ENCODE measurements at regions of chr2 and their contacts with region 1.

Region 1: GRCh38 chr2:241041589-241042158 is 43.3 kb downstream of the SNED1 start:
- DNase-seq: no peak
- H3K4me3 ChIP-seq: no peak overlapping the region
- H3K27ac ChIP-seq: no peak overlapping the region
- H3K4me1 ChIP-seq: no peaks in the 10 kb centered on the region
- H3K27me3 ChIP-seq: peaks cover 5% of the 10 kb centered on the region
- CTCF ChIP-seq: no peak

Region 2: DNA sequence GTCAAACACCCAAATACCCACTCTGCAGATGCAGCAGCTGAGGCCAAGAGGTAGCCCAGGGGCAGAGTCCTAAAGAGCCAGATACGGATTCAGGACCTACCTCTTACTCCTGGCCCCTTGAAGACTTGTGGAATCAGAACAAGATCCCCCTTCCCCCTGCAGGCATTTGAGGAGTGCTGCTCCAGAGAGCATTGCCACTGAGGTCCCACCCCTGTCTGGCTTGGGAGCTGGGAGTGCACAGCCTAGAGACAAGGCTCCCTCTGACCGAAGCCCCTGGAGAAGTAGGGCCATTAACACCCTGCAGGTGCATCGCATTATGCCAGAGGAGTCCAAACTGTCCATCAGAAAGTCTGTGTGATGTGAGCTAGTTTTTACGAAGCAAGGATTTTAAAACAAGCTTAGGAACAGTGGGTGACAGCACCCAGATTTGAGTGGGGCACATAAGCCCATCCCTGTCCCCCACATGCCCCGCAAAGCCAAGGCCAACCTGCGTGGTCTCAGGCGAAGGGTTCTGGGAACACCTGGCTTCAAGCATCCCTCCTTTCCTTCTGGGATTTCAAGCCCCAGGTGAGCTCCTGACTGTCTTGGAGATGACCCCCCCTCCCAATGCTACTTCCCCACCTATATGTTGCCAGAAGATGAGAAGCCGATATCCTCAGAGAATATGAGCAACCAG is 12.0 kb after region 1 on chr2:
- CTCF ChIA-PET with region 1: no interaction called
- POLR2A ChIA-PET with region 1: no interaction called
- intact Hi-C with region 1: no loop called
- DNase-seq: no peak
- H3K4me3 ChIP-seq: no peak overlapping the region
- H3K27ac ChIP-seq: no peak overlapping the region
- H3K4me1 ChIP-seq: no peaks in the 10 kb centered on the region
- H3K27me3 ChIP-seq: no peaks in the 10 kb centered on the region
- CTCF ChIP-seq: no peak

Region 3: DNA sequence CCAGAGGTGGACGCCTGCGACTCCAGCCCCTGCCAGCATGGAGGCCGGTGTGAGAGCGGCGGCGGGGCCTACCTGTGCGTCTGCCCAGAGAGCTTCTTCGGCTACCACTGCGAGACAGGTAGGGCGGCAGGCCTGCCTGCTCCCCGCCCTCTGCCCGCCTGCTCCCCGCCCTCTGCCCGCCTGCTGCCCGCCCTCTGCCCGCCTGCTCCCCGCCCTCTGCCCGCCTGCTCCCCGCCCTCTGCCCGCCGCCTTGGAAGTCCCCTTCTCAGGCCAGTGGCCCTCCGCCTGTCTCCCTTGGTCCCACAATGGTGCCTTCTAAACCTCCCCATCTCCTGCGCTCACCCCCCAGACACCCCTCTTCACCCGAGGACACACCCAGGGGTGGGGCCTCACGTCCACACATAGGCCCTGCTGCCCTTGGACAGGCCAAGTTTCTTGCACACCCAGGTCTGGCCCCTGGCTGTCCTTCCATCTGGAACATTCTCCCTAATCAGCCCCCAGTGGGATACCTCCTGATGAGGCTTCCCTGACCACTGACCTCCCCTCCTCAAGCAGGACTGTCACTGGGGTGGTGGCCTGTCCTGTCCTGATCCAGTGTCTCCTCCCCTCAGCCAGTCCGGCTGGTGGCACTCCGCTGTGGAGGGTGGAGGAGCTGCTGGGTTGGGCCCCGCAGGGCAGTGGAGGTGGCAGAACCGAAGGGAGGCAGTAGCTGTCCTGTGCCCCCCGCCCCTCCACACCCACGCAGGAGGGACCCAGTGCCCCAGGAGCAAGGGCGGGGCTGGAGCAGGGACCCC is 22.5 kb after region 1 on chr2:
- CTCF ChIA-PET with region 1: no interaction called
- POLR2A ChIA-PET with region 1: no interaction called
- intact Hi-C with region 1: loop called (anchors 2 kb)
- DNase-seq: no peak
- H3K4me3 ChIP-seq: no peak overlapping the region
- H3K27ac ChIP-seq: no peak overlapping the region
- H3K4me1 ChIP-seq: no peaks in the 10 kb centered on the region
- H3K27me3 ChIP-seq: no peaks in the 10 kb centered on the region
- CTCF ChIP-seq: no peak